Dorsolateral prefrontal cortex (tissue), 120 donors: ENCODE measurements at regions of chr2 and their contacts with region 1.

Region 1: DNA sequence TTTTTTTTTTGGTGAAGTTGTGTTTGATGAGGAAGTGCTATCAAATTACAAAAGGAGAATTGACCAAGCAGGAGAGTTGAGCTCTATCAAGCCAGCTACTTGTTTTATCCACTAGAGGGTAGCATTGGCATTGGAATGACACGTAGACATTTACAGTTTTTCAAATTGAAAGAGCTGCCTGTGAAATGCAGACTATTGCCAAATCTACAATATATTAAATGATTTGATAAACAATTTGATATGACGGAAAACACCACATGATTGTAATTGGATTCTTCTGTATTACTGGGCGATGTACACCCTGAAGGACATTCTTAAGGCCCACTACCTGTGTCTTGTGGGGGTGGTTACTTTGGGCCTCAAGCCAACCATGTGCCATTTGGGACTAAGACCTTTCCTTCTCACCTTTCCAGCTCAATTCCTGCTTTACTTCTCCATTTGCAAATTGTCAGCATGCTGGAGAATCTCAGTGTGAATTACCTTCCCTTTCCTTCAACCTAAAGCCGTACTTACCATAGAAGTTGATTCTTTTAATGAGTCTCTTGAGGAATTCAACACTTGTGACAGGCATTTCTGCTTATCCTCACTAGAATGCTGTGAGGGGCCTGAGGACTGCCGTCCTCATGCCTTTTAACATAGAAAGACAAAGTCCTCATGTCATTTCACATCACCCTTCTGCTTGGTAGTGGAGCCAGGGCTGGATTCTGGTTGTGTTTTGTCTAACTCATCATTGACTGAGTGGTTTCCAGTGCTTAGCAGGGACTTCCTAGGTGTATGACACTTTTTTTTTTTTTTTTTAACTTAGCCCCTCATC is 134.8 kb upstream of the THUMPD2 start:
- DNase-seq: no peak
- H3K4me3 ChIP-seq: no peak overlapping the region
- H3K27ac ChIP-seq: no peak overlapping the region
- H3K27me3 ChIP-seq: peaks cover 0 to 13% (median 0%) of the 10 kb centered on the region in 45 donors
- CTCF ChIP-seq: peak; percentile 65 to 94 (median 82)

Region 2: DNA sequence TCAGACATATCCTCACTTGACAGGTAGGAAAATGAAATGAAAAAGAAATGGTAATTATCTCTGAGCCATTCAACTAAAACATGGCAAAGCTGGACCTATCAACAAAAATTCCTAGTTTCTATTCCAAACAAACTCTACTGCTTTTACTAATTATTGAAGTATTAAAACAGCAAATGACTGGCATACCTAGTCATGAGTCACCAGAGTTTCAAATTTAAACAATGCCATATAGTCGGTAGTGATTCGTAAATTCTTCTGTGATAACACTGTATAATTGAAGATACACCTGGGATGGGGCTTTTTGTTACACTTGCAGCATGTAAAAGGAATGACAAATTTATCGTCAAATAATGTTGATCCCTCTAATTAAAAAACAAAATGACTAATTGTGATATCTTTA is 18.3 kb after region 1 on chr2:
- intact Hi-C with region 1: loop called in 1 of 2 experiments (anchors 2 kb)
- DNase-seq: no peak
- H3K4me3 ChIP-seq: no peak overlapping the region
- H3K27ac ChIP-seq: no peak overlapping the region
- H3K27me3 ChIP-seq: peaks cover 0 to 15% (median 0%) of the 10 kb centered on the region in 45 donors
- CTCF ChIP-seq: no peak

Region 3: GRCh38 chr2:40554668-40555285 is 640.9 kb after region 1 on chr2:
- intact Hi-C with region 1: loop called in 1 of 2 experiments (anchors 5 kb)
- DNase-seq: peak in 6 of 10 donors; percentile 8 to 69 (median 38)
- H3K4me3 ChIP-seq: no peak overlapping the region
- H3K27ac ChIP-seq: no peak overlapping the region
- H3K27me3 ChIP-seq: peaks cover 0 to 9% (median 0%) of the 10 kb centered on the region in 45 donors
- CTCF ChIP-seq: peak; percentile 45 to 82 (median 72)

Region 4: DNA sequence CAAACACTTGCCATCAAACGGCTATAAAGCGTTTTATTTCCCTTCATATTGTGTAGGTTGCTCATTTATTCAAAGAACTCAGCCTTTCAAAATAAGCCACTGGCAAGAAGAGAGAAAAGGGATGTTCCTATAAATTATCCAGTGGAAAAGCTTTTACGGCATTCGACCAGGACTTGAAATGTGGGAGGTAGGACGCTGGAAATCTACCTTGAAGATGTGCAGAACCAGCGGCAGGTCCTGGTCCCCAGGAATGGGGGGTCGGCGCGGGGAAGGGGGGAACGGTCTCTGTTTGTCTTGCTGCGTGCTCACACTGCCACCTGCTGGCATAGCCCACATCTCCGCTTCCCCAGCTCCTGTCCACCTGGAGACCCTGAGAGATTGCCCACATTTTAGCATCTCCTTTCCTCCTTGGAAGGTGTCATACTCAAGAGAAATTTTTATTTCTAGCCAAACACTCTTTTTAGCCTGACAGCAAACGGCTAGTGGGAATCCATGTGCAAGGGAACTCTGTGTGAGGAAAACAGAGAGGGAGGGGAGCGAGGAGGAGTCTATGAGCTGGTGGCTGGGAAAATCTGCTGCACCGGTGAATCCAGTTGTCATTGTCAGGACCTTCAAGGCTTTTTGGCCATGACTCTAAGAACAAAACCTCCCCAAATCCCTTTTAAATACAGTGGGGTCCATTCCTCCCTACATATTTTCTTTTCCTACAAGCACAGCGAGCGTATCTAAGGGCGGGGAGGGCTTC is 1785.0 kb after region 1 on chr2:
- intact Hi-C with region 1: loop called (anchors 5 kb)
- DNase-seq: peak; percentile 15 to 69 (median 58)
- H3K4me3 ChIP-seq: peak overlapping the region in 48 of 59 donors; percentile 1 to 54 (median 26)
- H3K27ac ChIP-seq: peak overlapping the region in 31 of 59 donors; percentile 6 to 76 (median 41)
- H3K27me3 ChIP-seq: peaks cover 0 to 8% (median 0%) of the 10 kb centered on the region in 45 donors
- CTCF ChIP-seq: peak; percentile 45 to 89 (median 76)

Region 5: GRCh38 chr2:41782306-41783158 is 1868.7 kb after region 1 on chr2:
- intact Hi-C with region 1: loop called in 1 of 2 experiments (anchors 5 kb)
- DNase-seq: peak in 1 of 10 donors; percentile 9
- H3K4me3 ChIP-seq: no peak overlapping the region
- H3K27ac ChIP-seq: peak overlapping the region in 6 of 59 donors; percentile 20 to 60 (median 34)
- H3K27me3 ChIP-seq: peaks cover 0 to 4% (median 0%) of the 10 kb centered on the region in 45 donors
- CTCF ChIP-seq: peak; percentile 68 to 92 (median 80)